CD4-positive, alpha-beta T cell (primary cell): ENCODE measurements at regions of chr15 and their contacts with region 1.

Region 1: DNA sequence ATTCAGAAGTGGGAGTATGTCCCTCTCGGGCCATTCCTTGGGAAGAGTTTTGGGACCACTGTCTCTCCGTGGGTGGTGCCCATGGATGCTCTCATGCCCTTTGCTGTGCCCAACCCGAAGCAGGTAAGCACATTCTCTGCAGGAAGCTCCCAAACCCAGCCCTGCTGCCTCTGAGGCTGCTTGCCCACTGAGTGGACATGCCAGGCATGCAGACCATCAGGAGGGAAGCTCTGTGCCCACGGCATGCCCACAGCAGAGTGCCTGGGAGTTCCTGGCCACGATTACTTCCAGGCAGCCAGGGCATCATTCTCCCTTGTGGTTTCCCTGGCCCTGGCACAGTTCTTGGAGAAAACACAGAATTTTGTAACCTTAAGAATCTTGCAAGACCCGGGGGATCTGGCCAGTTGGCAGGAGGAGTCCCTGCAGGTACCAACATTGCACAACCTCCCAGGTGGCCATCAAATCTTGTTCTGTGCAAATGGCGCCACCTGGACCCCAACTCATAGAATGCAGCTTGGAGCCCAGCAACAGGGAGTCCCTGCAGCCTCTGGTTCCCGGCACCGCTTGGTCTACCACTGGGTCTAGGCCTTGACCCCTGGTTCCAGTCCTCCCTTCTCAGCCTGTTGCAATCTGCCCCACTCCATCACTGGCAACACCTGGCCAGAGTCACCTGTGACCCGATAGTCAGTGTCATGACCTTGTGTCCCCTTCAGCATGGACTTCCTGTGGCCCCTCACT is 20.4 kb downstream of the FAH start:
- DNase-seq: peak; percentile 52 to 78 (median 64)
- ATAC-seq: peak; percentile 77
- H3K4me3 ChIP-seq: no peak overlapping the region
- H3K4me3 Mint-ChIP-seq: no peak overlapping the region
- H3K27ac ChIP-seq: no peak overlapping the region
- H3K27ac Mint-ChIP-seq: no peak overlapping the region
- H3K4me1 ChIP-seq: no peaks in the 10 kb centered on the region
- H3K4me1 Mint-ChIP-seq: no peaks in the 10 kb centered on the region
- H3K27me3 ChIP-seq: no peaks in the 10 kb centered on the region
- H3K27me3 Mint-ChIP-seq: no peaks in the 10 kb centered on the region
- CTCF ChIP-seq: peak; percentile 64

Region 2: GRCh38 chr15:78492872-78493271 is 1680.3 kb before region 1 on chr15:
- CTCF ChIA-PET with region 1: no interaction called
- POLR2A ChIA-PET with region 1: no interaction called
- intact Hi-C with region 1: loop called in 1 of 2 experiments (anchors 5 kb)
- DNase-seq: no peak
- ATAC-seq: no peak
- H3K4me3 ChIP-seq: no peak overlapping the region
- H3K4me3 Mint-ChIP-seq: no peak overlapping the region
- H3K27ac ChIP-seq: no peak overlapping the region
- H3K27ac Mint-ChIP-seq: peak overlapping the region; percentile 4
- H3K4me1 ChIP-seq: no peaks in the 10 kb centered on the region
- H3K4me1 Mint-ChIP-seq: peaks cover 14% of the 10 kb centered on the region
- H3K27me3 ChIP-seq: no peaks in the 10 kb centered on the region
- H3K27me3 Mint-ChIP-seq: no peaks in the 10 kb centered on the region
- CTCF ChIP-seq: no peak

Region 3: DNA sequence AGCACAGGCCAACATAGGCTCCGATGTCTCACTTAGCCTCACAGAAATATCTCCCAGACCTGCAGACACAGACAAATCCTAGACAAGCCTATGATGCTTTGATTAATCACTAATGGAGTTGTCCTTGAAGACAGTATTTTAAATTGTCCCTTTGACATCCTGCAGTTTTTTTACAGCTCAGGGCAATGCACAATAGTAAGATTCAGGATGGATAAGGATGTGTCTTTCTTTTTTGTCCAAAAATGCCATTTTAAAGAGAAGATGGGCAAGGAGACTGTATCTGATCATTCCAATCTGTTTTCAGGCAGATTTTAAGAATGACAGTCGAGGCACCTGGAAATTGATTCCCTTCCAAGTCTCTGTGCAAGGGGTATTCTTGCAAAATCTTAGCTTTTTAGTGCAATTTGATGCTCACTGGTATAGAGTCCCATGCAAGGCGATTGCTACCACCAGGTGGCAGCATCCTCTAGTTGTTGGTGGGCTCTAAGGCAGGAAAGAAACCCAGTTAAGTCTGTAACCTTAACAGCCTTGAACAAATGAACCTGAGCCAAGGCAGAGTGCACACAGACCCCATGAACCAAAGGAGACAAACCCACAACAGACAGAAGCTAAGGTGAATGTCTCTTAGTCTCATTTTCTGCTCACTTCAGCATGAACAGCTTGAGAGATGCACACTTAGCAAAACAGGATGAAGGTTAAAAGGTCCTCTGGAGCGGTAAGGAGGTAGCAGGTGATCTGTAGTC is 792.3 kb before region 1 on chr15:
- CTCF ChIA-PET with region 1: interaction called, 17 read pairs
- POLR2A ChIA-PET with region 1: interaction called, 3 read pairs
- intact Hi-C with region 1: loop called (anchors 1 kb)
- DNase-seq: peak; percentile 62 to 81 (median 71)
- ATAC-seq: peak; percentile 89
- H3K4me3 ChIP-seq: no peak overlapping the region
- H3K4me3 Mint-ChIP-seq: no peak overlapping the region
- H3K27ac ChIP-seq: no peak overlapping the region
- H3K27ac Mint-ChIP-seq: peak overlapping the region; percentile 13
- H3K4me1 ChIP-seq: no peaks in the 10 kb centered on the region
- H3K4me1 Mint-ChIP-seq: peaks cover 14% of the 10 kb centered on the region
- H3K27me3 ChIP-seq: no peaks in the 10 kb centered on the region
- H3K27me3 Mint-ChIP-seq: no peaks in the 10 kb centered on the region
- CTCF ChIP-seq: peak; percentile 85

Region 4: DNA sequence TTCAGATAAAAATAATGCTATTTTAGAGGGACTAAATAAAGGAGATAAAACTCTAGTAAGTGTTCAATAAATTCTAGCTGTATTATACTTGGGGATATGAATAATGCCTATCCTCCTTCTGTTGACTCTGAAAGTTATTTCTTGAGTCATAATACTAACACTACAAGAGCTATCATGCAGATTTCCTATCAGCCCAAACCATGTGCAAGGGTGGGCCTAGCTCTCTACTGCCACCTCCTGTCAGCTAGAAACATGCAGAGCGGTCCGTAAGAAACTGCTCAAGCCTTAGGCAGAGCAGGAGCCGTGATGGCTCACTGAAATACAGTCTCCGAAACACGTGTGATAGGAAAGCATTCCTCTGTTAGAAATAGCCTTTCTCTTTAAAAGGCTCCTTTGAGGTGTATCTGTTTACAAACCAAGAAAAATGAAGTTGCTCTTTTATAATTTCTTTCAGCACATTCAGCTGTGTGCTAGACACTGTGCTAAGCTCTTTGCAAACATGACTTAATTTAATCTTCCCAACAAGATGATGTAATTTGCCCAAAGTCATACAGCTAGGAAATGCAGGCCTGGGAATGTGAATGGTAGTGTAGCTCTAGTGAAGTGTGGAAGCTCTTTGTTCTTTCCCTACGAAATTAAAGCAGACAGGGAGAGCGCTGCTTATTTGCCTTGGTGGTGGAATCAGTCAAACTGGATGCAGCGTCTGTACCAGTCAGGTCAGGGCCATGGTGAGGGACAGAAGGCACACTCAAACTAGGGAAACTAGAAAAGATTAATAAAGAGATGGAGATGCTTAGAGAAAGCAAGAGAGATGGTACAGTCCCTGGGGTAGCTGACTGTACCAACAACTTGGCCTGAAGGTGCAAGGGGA is 319.5 kb before region 1 on chr15:
- CTCF ChIA-PET with region 1: interaction called, 3 read pairs
- POLR2A ChIA-PET with region 1: no interaction called
- intact Hi-C with region 1: loop called in 1 of 2 experiments (anchors 1 kb)
- DNase-seq: peak; percentile 35 to 79 (median 46)
- ATAC-seq: peak; percentile 99
- H3K4me3 ChIP-seq: no peak overlapping the region
- H3K4me3 Mint-ChIP-seq: no peak overlapping the region
- H3K27ac ChIP-seq: no peak overlapping the region
- H3K27ac Mint-ChIP-seq: peak overlapping the region; percentile 22
- H3K4me1 ChIP-seq: no peaks in the 10 kb centered on the region
- H3K4me1 Mint-ChIP-seq: peaks cover 24% of the 10 kb centered on the region
- H3K27me3 ChIP-seq: no peaks in the 10 kb centered on the region
- H3K27me3 Mint-ChIP-seq: no peaks in the 10 kb centered on the region
- CTCF ChIP-seq: peak; percentile 98